PC-9 (cell line): ENCODE measurements at regions of chr15 and their contacts with region 1.

Region 1: DNA sequence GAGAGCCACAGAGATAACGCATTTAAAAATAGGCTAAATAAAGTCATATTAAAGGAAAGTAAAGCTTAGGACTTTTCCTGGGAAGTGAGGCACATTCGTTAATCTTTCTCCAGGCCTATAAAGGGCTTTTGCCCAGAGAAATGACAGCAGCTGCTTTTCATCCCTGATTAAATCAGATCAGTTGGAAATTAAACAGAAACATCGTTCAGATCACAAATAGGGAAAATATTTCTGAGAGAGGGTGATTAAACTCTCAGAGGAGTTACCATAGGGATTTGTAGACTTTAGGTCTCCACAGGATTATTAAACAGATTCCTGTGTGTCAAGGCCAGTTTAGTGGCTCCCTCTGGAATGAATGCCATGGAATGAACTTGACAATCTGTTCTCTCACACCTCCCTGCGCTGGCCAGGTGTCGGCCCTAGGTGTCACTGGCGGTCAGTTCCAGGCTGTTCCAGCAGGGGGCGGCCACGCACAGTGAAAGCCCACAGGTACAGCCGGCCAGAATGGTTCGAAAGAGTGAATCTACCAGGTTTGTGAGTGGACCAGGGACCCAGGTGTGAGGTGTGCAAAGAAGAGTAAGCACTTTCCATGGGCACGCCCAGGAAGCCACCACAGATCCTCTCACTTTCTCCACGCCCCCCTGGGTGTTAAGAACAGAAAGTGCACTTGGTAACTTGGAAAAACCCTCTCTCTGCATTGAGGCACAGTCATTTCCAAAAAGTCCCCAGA is 253.0 kb upstream of the RASGRP1 start:
- DNase-seq: peak; percentile 56 to 93
- H3K4me3 ChIP-seq: no peak overlapping the region
- H3K27ac ChIP-seq: no peak overlapping the region
- H3K4me1 ChIP-seq: no peaks in the 10 kb centered on the region
- H3K27me3 ChIP-seq: no peaks in the 10 kb centered on the region
- CTCF ChIP-seq: peak; percentile 93

Region 2: GRCh38 chr15:38707802-38708671 is 109.6 kb before region 1 on chr15:
- CTCF ChIA-PET with region 1: no interaction called
- POLR2A ChIA-PET with region 1: no interaction called
- intact Hi-C with region 1: loop called (anchors 1 kb)
- DNase-seq: peak in 1 of 2 experiments; percentile 43
- H3K4me3 ChIP-seq: no peak overlapping the region
- H3K27ac ChIP-seq: no peak overlapping the region
- H3K4me1 ChIP-seq: peaks cover 3% of the 10 kb centered on the region
- H3K27me3 ChIP-seq: no peaks in the 10 kb centered on the region
- CTCF ChIP-seq: peak; percentile 77

Region 3: DNA sequence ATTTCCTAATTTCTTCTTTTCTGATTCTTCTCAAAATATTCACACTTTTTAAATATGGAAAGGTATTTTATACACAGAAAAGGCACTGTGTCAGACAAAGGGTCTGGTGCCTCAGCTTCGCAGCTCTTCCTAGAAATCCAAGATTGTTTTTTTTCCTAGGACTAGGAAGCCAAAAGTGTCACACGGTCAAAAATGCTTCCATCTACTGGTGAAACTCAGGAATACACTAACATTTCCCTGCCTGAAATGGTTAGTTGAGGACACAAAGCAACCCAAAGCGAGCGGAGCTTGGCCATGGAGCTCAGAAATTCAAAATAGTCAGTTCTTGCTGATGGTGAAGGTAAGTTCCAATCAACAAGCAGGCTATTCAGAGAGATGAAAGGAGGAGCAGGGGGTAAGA is 173.5 kb after region 1 on chr15:
- CTCF ChIA-PET with region 1: no interaction called
- POLR2A ChIA-PET with region 1: no interaction called
- intact Hi-C with region 1: loop called (anchors 1 kb)
- DNase-seq: no peak
- H3K4me3 ChIP-seq: no peak overlapping the region
- H3K27ac ChIP-seq: no peak overlapping the region
- H3K4me1 ChIP-seq: no peaks in the 10 kb centered on the region
- H3K27me3 ChIP-seq: no peaks in the 10 kb centered on the region
- CTCF ChIP-seq: peak; percentile 43

Region 4: DNA sequence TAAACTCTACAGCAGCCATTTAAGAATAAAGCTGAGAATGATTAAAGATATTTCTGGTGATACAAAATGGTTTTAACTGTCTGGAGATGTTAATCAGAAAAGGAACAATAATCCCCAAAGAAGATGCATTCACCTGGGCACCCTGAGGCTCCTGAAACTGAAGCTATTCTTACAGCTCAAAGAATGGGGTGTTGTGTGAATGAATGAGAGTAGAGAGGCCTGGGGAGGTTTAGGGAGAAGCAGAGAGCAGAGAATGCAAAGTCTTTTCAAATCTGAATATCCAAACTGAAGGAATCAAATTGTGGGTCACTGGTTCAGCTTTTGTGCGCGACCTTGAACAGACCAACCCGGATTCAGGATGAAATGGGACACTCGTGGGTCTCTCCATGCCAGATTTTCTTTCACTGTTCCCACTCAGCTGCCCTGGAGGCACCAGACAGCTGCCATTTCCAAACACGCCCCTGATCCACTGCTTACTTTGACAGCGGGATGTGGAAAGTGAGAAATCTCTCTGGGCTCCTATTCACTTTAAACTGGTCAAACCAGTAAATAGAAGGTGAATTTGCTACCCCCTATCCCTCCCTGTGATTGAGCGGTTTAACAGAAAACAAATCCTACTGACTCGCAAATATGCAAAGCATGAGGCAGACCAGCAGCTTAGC is 277.8 kb after region 1 on chr15:
- CTCF ChIA-PET with region 1: no interaction called
- POLR2A ChIA-PET with region 1: no interaction called
- intact Hi-C with region 1: no loop called
- DNase-seq: peak in 1 of 2 experiments; percentile 16
- H3K4me3 ChIP-seq: no peak overlapping the region
- H3K27ac ChIP-seq: no peak overlapping the region
- H3K4me1 ChIP-seq: no peaks in the 10 kb centered on the region
- H3K27me3 ChIP-seq: no peaks in the 10 kb centered on the region
- CTCF ChIP-seq: no peak